Caco-2 (cell line): ENCODE measurements at regions of chr2 and their contacts with region 1.

Region 1: GRCh38 chr2:28269019-28269784 is 123.5 kb upstream of the FOSL2 start:
- DNase-seq: peak; percentile 89 to 95
- H3K4me3 ChIP-seq: no peak overlapping the region
- H3K4me3 Mint-ChIP-seq: peak overlapping the region; percentile 72
- H3K27ac Mint-ChIP-seq: peak overlapping the region; percentile 94
- H3K4me1 ChIP-seq: peaks cover 59% of the 10 kb centered on the region
- H3K4me1 Mint-ChIP-seq: peaks cover 60% of the 10 kb centered on the region
- H3K27me3 ChIP-seq: no peaks in the 10 kb centered on the region
- H3K27me3 Mint-ChIP-seq: no peaks in the 10 kb centered on the region
- CTCF ChIP-seq: no peak

Region 2: DNA sequence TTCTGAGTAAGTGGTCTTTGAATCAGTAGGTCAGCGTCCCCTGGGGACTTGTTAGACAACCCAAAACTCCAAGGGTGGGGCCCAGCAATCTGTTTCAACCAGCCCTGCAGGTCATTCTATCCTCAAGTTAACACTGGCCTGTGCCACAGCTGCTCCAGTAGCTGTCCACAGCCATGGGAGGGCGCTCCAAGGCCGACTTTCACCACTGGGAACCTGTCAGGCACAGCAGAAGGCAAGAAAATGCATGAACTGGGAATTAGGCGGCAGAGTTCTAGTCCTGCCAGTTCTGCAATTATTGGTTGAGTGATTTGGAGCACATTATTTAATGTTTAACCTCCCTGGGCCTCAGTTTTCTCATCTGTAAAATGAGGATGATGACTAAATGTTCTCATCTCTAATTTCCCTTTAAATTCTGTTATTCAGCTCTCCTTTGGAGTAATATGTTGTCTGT is 515.0 kb before region 1 on chr2:
- CTCF ChIA-PET with region 1: no interaction called
- POLR2A ChIA-PET with region 1: interaction called, 13 read pairs
- intact Hi-C with region 1: loop called (anchors 2 kb)
- DNase-seq: peak; percentile 91 to 92
- H3K4me3 ChIP-seq: peak overlapping the region; percentile 56
- H3K4me3 Mint-ChIP-seq: peak overlapping the region; percentile 89
- H3K27ac Mint-ChIP-seq: peak overlapping the region; percentile 99
- H3K4me1 ChIP-seq: peaks cover 33% of the 10 kb centered on the region
- H3K4me1 Mint-ChIP-seq: peaks cover 21% of the 10 kb centered on the region
- H3K27me3 ChIP-seq: no peaks in the 10 kb centered on the region
- H3K27me3 Mint-ChIP-seq: no peaks in the 10 kb centered on the region
- CTCF ChIP-seq: peak; percentile 77 to 83

Region 3: DNA sequence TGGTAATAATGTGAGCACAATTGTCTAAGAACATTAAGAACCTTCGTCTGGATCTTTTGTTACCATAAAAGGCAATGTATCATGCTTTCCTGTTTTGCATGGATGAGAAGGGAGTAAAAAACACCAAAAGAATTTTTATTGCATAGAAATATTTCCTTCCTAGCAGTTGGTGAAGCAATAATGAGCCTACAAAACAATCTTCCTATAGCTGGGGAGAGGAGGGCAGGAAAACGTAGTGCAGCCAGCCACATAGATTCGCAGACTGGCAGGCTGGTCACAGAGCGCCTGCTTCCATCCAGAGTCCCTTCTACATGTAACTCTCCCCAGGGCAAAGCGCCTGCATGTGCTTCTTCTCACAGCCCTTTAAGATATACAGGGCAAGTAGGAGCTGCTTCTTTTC is 188.3 kb before region 1 on chr2:
- CTCF ChIA-PET with region 1: no interaction called
- POLR2A ChIA-PET with region 1: no interaction called
- intact Hi-C with region 1: loop called (anchors 2 kb)
- DNase-seq: peak; percentile 57 to 74
- H3K4me3 ChIP-seq: no peak overlapping the region
- H3K4me3 Mint-ChIP-seq: no peak overlapping the region
- H3K27ac Mint-ChIP-seq: peak overlapping the region; percentile 71
- H3K4me1 ChIP-seq: peaks cover 27% of the 10 kb centered on the region
- H3K4me1 Mint-ChIP-seq: peaks cover 44% of the 10 kb centered on the region
- H3K27me3 ChIP-seq: no peaks in the 10 kb centered on the region
- H3K27me3 Mint-ChIP-seq: no peaks in the 10 kb centered on the region
- CTCF ChIP-seq: no peak

Region 4: DNA sequence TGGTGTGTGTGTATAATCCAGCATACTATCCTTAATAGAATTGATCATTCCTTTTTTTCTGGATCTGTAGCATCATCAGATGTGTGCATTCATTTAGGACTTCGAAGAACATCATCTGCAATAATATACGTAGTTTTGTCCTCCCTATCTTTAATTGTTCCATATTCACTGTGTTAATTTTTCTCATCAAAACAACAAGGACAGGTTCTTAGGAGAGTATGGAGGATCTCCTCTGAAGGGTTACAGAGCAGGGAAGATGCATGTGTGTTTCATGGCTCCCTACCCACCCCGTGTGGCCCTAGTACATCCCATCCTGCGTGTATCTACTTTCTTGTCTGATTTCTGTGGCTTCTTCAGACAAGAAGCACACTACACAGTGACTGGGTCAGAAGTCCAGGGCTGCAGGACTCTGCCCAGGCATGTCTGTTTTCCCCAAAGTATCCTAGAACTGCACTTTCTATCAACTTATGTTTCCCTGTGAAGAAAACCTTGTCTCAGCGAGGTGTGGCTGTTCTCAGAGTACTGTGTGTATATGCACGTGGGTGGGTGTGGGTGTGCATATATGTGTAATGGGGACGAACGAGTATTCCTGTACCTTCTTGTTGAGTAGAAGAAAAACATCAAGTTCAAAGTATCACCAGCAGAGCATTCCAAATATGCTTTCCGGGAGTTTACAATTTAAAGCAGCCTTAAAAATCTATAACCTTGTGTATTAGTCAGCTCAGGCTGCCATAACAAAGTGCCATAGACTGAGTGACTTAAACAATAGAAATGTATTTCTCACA is 96.9 kb before region 1 on chr2:
- CTCF ChIA-PET with region 1: no interaction called
- POLR2A ChIA-PET with region 1: no interaction called
- intact Hi-C with region 1: loop called (anchors 2 kb)
- DNase-seq: peak in 1 of 2 experiments; percentile 54
- H3K4me3 ChIP-seq: no peak overlapping the region
- H3K4me3 Mint-ChIP-seq: no peak overlapping the region
- H3K27ac Mint-ChIP-seq: peak overlapping the region; percentile 84
- H3K4me1 ChIP-seq: peaks cover 42% of the 10 kb centered on the region
- H3K4me1 Mint-ChIP-seq: peaks cover 28% of the 10 kb centered on the region
- H3K27me3 ChIP-seq: no peaks in the 10 kb centered on the region
- H3K27me3 Mint-ChIP-seq: no peaks in the 10 kb centered on the region
- CTCF ChIP-seq: no peak

Region 5: GRCh38 chr2:28286678-28287077 is 17.5 kb after region 1 on chr2:
- CTCF ChIA-PET with region 1: no interaction called
- POLR2A ChIA-PET with region 1: no interaction called
- intact Hi-C with region 1: no loop called
- DNase-seq: no peak
- H3K4me3 ChIP-seq: no peak overlapping the region
- H3K4me3 Mint-ChIP-seq: no peak overlapping the region
- H3K27ac Mint-ChIP-seq: no peak overlapping the region
- H3K4me1 ChIP-seq: no peaks in the 10 kb centered on the region
- H3K4me1 Mint-ChIP-seq: peaks cover 11% of the 10 kb centered on the region
- H3K27me3 ChIP-seq: no peaks in the 10 kb centered on the region
- H3K27me3 Mint-ChIP-seq: no peaks in the 10 kb centered on the region
- CTCF ChIP-seq: no peak

Region 6: GRCh38 chr2:28544919-28545589 is 275.9 kb after region 1 on chr2:
- CTCF ChIA-PET with region 1: no interaction called
- POLR2A ChIA-PET with region 1: no interaction called
- intact Hi-C with region 1: loop called (anchors 10 kb)
- DNase-seq: peak; percentile 73 to 85
- H3K4me3 ChIP-seq: peak overlapping the region; percentile 3
- H3K4me3 Mint-ChIP-seq: peak overlapping the region; percentile 86
- H3K27ac Mint-ChIP-seq: peak overlapping the region; percentile 90
- H3K4me1 ChIP-seq: peaks cover 49% of the 10 kb centered on the region
- H3K4me1 Mint-ChIP-seq: peaks cover 43% of the 10 kb centered on the region
- H3K27me3 ChIP-seq: no peaks in the 10 kb centered on the region
- H3K27me3 Mint-ChIP-seq: no peaks in the 10 kb centered on the region
- CTCF ChIP-seq: no peak